ENCODE measurements at regions of chr18 and their contacts with region 1.

Region 1: DNA sequence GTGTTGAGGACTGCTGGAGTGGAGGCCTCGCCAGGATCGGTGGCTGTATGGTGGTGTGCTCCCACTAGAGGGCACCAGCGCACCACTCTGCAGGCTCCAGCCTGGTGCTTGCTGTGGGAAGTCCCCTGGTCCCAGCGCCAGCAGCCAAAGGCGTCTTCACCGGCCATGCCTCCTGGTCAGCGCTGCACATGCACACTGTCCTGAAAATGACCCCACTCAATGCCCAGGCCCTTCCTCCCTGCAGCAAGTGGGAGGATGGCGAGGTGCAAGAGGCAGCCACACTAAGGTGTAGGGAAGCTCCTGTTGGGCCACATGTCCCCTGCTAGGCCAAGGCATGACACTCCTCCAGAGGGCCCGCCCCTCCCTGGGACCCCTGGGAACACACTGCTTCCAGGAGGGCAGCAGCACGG is 136.5 kb downstream of the CTIF start:
- DNase-seq: peak; percentile 91
- ATAC-seq: peak; percentile 97
- H3K4me3 Mint-ChIP-seq: no peak overlapping the region
- H3K27ac Mint-ChIP-seq: no peak overlapping the region
- H3K4me1 Mint-ChIP-seq: peaks cover 2% of the 10 kb centered on the region
- H3K27me3 Mint-ChIP-seq: no peaks in the 10 kb centered on the region

Region 2: DNA sequence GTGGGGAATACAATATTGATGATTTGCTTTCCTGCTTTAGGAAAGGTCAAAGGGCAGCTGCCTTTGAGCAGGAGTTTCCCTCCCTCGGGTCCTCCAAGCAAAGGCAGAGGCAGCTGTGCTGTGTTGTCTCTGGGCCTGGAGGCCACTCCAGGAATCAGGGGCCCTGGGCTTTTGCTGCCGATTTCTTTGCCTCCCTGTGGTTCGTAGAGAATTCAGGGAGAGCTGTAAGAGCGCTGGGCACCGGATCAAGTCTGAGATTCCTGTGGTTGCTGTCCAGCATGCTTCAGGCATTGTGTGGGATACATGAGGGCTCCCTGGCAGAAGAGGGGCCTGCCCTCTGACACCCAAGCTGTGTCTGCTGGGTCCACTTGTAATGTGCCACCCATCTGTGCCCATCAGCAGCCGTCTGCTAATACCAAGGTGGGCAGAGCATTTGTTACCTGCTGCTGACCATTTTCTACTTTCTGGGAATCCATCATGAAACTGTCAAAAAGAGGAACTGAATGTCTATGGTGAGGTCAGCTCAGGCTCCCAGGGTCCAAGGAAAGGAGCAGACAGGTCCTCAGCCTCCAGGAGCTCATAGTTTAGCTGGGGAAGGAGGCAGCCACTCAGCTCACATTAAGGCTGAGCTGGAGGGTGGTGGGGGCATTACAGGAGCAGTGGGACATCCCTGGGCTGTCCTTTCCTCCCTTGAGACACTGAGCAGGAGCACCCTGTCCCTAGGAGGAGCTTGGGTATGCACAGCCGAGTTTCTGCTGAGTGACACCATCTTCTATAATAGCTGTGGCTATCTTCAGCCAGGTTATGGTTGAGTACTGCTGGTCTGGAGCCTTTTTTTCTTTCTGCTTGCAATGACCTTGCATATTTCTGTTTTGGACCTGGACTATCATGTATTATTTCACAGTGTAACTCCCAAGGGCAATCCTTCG is 68.0 kb before region 1 on chr18:
- CTCF ChIA-PET with region 1: no interaction called
- POLR2A ChIA-PET with region 1: no interaction called
- intact Hi-C with region 1: no loop called
- DNase-seq: no peak
- ATAC-seq: no peak
- H3K4me3 Mint-ChIP-seq: no peak overlapping the region
- H3K27ac Mint-ChIP-seq: no peak overlapping the region
- H3K4me1 Mint-ChIP-seq: no peaks in the 10 kb centered on the region
- H3K27me3 Mint-ChIP-seq: no peaks in the 10 kb centered on the region

Region 3: DNA sequence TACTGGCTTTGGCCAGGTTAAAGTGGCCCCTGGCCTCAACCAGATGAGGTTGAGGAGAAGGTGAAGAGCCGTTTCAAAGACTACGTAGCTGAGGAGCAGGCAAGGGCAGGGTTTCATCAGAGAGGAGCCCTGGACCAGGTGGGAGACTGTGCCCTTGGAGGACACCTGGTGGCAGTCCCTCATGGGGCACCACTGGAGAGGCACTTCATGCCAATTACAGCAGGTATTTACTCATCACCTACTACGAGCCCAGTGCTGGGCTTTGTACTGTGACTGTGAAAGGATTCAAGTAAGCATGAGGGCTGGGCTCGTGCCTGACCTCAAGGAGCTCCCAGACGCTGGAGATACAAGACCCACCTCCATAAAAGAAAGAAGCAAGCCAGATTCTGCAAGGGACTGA is 237.8 kb after region 1 on chr18:
- CTCF ChIA-PET with region 1: no interaction called
- POLR2A ChIA-PET with region 1: no interaction called
- intact Hi-C with region 1: loop called in 1 of 2 experiments (anchors 2 kb)
- DNase-seq: peak; percentile 69
- ATAC-seq: peak; percentile 90
- H3K4me3 Mint-ChIP-seq: no peak overlapping the region
- H3K27ac Mint-ChIP-seq: no peak overlapping the region
- H3K4me1 Mint-ChIP-seq: peaks cover 12% of the 10 kb centered on the region
- H3K27me3 Mint-ChIP-seq: no peaks in the 10 kb centered on the region

Region 4: DNA sequence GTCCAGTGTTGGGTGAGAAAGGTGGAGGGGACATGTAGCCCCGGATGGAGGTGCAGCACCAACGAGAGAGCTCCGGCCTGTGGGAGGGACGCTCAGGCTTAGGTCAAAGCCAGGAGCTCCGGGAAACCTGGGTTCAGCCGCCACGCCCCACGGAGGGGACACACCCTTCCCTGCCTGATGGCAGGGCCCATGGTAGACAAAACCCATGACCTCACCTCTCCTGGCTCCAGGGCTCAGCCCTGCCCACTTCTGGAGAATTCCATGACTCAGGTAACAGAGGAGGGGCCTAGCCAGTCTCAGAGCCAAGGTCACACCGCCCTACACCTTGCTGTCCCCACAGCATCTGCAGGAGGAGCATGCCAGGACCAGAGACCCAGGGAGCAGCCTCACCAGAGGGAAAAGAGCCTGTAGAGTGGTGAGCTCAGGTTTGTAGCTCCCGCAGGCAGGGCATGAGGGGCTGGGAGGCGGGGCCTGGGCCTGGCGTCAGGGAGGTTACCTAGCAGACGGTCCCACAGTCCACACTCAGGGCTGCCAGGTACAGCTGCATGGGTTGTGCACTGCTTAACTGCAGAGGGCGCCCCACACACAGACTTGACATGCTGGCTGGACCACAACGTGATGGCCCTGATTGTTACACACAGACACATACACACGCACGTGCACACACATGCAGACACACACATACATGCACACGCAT is 346.2 kb after region 1 on chr18:
- CTCF ChIA-PET with region 1: interaction called, 3 read pairs
- POLR2A ChIA-PET with region 1: no interaction called
- intact Hi-C with region 1: loop called in 1 of 2 experiments (anchors 2 kb)
- DNase-seq: peak; percentile 84
- ATAC-seq: peak; percentile 88
- H3K4me3 Mint-ChIP-seq: no peak overlapping the region
- H3K27ac Mint-ChIP-seq: no peak overlapping the region
- H3K4me1 Mint-ChIP-seq: no peaks in the 10 kb centered on the region
- H3K27me3 Mint-ChIP-seq: no peaks in the 10 kb centered on the region

Region 5: DNA sequence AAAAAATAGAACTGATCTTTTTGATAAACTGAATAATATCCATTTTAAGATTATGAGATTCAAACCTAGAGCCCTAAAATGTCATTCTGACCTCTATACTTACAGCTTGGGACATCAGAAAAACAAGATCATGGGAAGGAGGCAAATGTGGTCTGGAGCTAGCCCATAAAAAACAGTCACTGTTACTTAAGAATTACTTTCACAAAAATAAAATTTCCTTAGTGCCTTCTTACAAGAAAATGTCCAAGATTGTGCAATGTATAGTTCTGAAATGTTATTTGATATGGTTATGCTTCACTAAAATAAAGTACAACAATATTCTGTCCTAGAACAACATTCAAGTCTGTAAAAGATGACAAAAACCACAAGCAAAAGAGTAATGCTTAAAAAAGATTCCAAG is 537.5 kb after region 1 on chr18:
- CTCF ChIA-PET with region 1: no interaction called
- POLR2A ChIA-PET with region 1: no interaction called
- intact Hi-C with region 1: no loop called
- DNase-seq: no peak
- ATAC-seq: no peak
- H3K4me3 Mint-ChIP-seq: no peak overlapping the region
- H3K27ac Mint-ChIP-seq: no peak overlapping the region
- H3K4me1 Mint-ChIP-seq: no peaks in the 10 kb centered on the region
- H3K27me3 Mint-ChIP-seq: no peaks in the 10 kb centered on the region

Region 6: GRCh38 chr18:49238433-49239042 is 563.2 kb after region 1 on chr18:
- CTCF ChIA-PET with region 1: interaction called, 4 read pairs
- POLR2A ChIA-PET with region 1: no interaction called
- intact Hi-C with region 1: loop called (anchors 1 to 5 kb)
- DNase-seq: peak; percentile 17
- ATAC-seq: no peak
- H3K4me3 Mint-ChIP-seq: no peak overlapping the region
- H3K27ac Mint-ChIP-seq: no peak overlapping the region
- H3K4me1 Mint-ChIP-seq: no peaks in the 10 kb centered on the region
- H3K27me3 Mint-ChIP-seq: no peaks in the 10 kb centered on the region

Region 7: GRCh38 chr18:49447810-49448745 is 772.7 kb after region 1 on chr18:
- CTCF ChIA-PET with region 1: interaction called, 5 read pairs
- POLR2A ChIA-PET with region 1: no interaction called
- intact Hi-C with region 1: loop called (anchors 1 to 5 kb)
- DNase-seq: peak; percentile 55
- ATAC-seq: peak; percentile 58
- H3K4me3 Mint-ChIP-seq: no peak overlapping the region
- H3K27ac Mint-ChIP-seq: no peak overlapping the region
- H3K4me1 Mint-ChIP-seq: peaks cover 8% of the 10 kb centered on the region
- H3K27me3 Mint-ChIP-seq: no peaks in the 10 kb centered on the region

Region 8: GRCh38 chr18:49858309-49859020 is 1183.1 kb after region 1 on chr18:
- CTCF ChIA-PET with region 1: interaction called, 3 read pairs
- POLR2A ChIA-PET with region 1: no interaction called
- intact Hi-C with region 1: loop called in 1 of 2 experiments (anchors 2 kb)
- DNase-seq: peak; percentile 76
- ATAC-seq: no peak
- H3K4me3 Mint-ChIP-seq: no peak overlapping the region
- H3K27ac Mint-ChIP-seq: no peak overlapping the region
- H3K4me1 Mint-ChIP-seq: no peaks in the 10 kb centered on the region
- H3K27me3 Mint-ChIP-seq: no peaks in the 10 kb centered on the region

Measured in activated CD4-positive, alpha-beta T cell treated with anti-CD3 and anti-CD28 coated beads for 36 hours (primary cell).